ENCODE measurements at regions of chr3 and their contacts with region 1.

Region 1: DNA sequence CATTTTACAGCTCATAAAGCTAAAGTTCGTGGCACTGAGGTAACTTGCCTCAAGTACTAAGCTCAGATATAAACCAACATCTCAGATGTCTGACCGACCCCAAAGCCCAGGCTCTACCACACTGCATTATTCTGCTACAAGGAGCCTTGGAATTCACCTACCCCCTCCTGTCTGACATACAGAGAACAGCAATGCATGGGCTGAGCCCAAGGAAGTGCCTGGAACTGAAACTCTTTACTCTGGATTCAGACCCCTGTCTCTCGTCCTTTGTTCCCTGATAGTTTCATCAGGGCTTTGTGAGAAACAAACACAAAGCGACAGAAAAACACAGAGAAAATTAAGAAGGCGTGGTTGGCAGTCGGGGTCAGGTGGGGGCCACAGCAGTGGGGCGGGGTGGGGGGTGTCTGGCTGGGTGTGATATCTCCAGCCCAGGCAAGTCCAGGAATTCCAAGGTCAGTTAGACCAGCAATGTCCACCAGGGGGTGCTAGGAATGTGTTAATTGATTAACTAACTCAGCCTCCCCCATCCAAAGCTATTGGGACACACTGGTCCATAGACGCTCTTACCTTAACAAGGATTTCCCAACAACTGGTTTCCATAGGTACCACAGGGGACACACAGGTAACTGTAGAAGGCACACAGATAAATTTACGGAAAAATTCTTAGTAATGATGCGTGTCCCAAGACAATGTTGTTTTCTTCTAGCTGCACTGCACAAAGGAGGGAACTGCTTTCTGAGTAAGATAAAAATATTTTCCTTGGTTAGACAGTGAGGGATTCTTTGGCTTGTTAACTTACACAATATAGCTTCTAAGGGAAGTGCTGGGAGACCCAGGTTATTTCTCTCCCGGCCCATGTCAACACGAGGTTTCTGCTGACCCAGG is 18.8 kb upstream of the SSUH2 start:
- DNase-seq: peak; percentile 66
- CTCF ChIP-seq: peak; percentile 52

Region 2: DNA sequence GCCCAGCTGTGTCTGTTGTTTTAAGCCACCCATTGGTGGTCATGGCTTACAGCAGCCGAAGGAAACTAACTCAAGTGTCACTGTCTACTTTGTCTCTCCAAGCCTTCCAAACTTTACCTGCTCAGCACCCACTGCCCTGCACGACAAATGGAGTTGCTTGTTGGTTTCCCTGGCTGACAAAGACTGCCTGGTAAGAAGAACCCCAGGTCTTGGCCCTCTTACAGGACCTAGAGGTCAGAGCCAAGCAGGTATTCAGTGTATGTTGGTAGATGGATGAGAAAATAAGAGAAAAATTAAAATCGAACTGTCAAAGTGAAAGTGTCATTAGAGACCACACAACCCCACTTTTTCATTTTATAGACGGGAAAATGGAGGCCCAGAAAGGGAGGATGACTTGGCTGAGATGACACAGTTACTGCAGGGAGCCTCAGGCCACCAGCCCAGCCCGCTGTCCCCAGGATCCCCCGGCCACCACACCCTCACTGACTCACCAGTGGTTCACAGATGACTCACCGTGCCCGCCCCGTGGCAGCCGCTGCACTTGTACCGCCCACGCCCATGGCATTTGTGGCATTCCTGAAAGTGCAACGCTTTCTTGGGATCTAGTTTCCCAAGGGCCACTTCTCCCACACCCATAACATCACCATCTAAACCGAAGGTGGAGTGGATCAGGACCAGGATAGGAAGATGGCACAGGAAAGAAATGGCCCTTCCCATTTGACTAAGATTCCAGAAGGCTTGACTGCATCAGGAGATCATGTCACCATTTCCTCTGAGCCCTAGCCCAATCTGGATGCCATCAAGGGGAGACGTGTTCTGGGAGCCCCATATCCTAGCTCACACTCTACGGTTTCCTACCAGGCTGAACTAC is 34.0 kb before region 1 on chr3:
- CTCF ChIA-PET with region 1: interaction called, 25 read pairs
- POLR2A ChIA-PET with region 1: no interaction called
- DNase-seq: peak; percentile 60
- CTCF ChIP-seq: no peak

Region 3: DNA sequence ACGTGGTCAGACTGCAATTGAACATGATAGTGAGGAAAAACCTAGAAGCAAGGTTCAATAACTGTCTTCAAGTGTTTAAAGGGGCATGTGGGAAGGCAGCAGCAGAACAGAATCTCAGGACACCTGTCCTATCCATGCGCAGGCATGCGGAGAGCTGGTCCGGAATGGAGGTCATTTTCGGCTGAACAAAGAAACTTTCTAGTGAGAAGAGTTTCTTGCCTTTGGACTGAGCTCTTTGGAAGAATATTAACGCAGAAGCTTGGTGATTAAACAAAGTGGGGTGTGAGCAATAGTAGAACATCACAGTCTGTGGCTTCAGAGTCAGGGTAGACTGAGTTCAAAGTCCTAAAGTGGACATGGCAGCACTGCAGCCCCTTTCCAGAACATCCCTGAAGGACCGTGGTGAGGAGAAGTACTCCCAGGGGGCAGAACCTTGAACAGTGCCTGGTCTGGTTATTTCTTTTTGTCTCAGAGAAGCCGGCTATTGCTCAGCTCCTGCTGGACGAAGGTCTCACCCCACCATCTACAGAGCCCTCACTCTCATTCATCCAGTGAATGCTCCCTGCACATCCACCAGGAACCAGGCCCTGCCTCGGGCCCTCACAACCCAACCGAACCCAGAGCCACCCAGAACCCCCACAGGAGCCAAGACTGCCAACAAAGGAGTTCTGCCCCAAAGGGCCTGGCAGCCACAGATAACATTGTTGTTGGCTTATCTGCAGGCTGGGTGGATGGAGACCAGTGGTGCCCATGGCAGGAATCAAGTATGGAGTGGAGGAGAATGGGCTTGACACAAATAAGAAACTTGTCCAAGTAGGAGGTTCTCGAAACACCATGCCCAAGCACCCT is 16.1 kb before region 1 on chr3:
- CTCF ChIA-PET with region 1: interaction called, 19 read pairs
- POLR2A ChIA-PET with region 1: no interaction called
- DNase-seq: no peak
- CTCF ChIP-seq: no peak

Region 4: DNA sequence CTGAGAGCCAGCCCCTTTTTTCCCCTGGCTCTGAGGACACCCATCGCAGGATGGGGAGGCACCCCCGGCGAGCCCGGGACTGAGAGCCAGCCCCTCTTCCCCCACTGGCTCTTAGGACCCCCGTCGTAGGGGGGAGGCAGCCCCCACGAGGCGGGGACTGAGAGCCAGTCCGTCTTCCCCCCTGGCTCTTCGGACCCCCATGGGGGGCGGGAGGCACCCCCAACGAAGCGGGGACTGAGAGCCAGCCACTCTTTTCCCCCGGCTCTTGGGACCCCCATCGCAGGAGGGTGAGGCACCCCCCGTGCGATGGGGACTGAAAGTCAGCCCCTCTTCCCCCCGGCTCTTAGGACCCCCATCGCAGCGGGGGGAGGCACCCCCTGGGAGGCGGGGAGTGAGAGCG is 17.9 kb after region 1 on chr3:
- CTCF ChIA-PET with region 1: interaction called, 19 read pairs
- POLR2A ChIA-PET with region 1: no interaction called
- DNase-seq: no peak
- CTCF ChIP-seq: no peak

Region 5: GRCh38 chr3:8784676-8785435 is 121.4 kb after region 1 on chr3:
- CTCF ChIA-PET with region 1: no interaction called
- POLR2A ChIA-PET with region 1: no interaction called
- DNase-seq: no peak
- CTCF ChIP-seq: no peak

Measured in GM10248 (cell line).